Posterior vena cava (tissue), 2 donors: ENCODE measurements at regions of chr2 and their contacts with region 1.

Region 1: DNA sequence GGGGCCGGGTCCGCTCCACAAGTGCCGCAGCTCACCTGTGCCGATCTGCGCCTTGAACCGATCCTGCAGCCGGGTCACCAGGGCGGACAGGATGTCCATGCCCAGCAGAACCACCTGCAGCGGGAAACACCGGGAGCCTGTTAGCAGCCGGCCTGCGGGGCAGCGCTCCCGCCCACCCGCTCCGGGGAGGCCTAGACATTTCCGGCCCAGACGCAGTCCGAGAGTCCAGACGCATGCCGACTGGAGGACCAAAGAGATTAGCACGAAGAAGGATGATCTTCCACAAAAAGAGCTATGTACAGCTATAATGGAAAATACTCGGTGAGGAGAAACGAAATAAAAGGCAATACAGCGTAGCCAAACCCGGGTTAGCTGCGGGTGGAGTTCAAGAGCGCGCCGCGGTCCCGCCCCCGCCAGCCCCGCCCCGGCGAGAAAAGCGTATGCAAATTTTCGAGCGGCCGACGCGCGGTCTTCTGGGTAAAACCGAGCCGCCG is 421 bp upstream of the RNU4ATAC start:
- DNase-seq: peak; percentile 96

Region 2: DNA sequence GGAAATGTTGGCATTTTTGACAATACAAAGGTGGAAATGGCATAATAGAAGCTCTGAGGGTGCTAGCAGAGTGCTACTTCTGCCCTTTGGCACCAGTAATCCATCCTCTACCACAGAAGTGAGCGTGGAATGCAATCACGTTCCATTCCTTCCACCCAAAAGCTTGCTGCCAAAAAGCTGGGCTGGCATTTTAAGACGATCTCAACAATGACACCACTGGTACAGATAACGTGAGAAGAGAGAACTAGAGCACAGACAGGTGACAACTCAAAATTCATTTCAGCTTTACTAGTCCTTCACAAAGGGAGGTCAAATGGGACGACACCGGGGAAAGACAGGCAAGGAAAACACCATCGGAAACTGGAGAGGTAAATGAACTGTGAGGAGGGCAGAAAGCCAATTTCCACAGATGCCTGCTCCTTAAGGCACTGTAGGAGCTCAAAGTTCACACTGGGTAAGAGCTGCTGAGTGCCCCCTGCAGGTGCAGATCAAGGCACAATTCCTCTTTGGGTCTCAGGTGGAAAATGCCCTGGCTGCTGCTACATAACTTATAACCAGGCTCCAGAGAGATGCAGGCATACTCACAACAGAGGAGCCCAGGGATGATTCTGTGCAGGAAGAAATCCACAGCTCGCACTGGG is 50.3 kb before region 1 on chr2:
- intact Hi-C with region 1: no loop called
- DNase-seq: no peak

Region 3: GRCh38 chr2:121565389-121566250 is 35.4 kb after region 1 on chr2:
- intact Hi-C with region 1: no loop called
- DNase-seq: no peak

Region 4: DNA sequence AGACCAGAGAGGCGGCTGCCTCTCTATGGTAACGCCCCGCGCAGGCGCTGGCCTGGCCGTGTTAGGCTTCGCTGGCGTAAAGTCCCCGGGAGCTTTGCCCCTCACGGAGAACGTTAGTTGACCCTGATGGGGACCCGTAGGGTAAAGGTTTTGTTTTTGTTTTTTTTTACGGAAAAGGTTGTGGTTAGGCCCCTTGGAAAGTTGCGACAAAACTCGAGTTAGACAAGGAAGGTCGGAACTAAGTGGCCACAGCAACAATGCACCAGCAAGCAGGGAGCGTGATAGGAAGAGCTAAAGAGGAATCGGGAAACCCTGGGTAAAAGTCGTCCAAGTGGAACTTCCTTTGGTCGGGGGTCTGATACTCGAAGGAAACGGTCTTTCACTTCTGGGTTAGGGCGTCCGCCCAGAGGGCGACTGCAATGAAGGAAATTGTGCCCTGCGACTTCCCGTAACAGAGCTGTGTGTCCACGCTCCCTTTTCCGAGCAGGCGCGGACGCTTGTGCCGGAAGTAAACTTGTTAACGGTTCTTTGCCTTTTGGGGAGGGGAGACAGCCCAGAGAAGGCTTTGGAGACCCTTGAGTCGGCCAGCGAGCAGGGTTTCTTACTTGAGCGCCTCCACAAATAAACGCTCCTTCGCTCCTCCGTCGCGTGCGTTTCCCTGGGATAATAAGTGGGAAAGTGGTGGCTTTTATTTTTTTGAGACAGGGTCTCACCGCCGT is 119.5 kb after region 1 on chr2:
- intact Hi-C with region 1: loop called in 1 of 2 experiments (anchors 5 kb)
- DNase-seq: peak; percentile 99

Region 5: DNA sequence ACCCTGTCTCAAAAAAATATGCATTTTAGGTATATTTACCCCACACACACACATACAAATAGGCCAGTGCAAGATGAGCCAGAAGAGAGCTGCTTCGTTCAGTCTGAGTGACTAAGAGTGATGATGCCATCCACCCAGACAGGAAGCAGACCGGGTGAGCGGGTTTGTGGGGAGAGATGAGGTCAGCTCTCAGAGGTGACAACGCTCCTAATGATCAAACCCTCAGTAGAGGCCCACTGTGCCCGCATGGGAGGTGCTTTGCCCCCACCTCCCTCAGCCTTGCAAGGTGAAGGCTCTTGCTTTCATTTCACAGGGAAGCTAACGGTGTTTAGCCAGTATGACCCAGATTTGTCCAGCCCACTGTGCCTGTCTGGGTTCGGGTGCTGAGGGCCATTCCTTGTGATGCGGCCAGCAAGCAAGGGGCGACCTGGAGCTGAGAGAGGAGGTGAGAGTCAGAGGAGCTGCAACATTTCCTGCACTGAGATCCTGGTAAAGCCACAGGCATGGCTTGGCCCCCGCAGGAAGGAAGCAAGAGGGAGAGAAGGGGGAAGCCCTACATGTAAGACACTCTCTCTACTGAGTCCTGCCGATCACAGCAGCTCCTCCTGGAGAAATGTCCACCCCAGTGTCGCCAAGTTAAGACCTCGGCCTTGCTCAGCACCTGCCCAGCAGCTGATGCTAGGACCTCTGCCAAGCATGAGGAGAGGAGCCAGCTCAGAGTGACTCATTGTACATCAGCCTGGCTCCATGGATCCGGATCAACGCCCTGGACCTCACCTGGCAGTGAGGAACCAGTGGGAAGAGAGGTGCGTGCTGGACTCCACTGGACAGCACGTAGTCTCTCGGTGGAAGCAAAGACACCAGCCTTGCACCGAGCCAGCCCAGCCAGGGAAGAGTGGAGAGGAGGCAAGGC is 169.4 kb after region 1 on chr2:
- intact Hi-C with region 1: loop called in 1 of 2 experiments (anchors 10 kb)
- DNase-seq: peak; percentile 84

Region 6: GRCh38 chr2:121710470-121711170 is 180.4 kb after region 1 on chr2:
- intact Hi-C with region 1: loop called (anchors 10 kb)
- DNase-seq: peak; percentile 38